Transverse colon (tissue), 4 donors: ENCODE measurements at regions of chr16 and their contacts with region 1.

Region 1: GRCh38 chr16:15865742-15866141 is 8.9 kb upstream of the MYH11 start:
- DNase-seq: no peak
- H3K4me3 ChIP-seq: no peak overlapping the region
- H3K27ac ChIP-seq: peak overlapping the region in 2 of 4 donors; percentile 18 to 61
- H3K4me1 ChIP-seq: peaks cover 0 to 3% (median 0%) of the 10 kb centered on the region in 4 donors
- H3K27me3 ChIP-seq: no peaks in the 10 kb centered on the region
- CTCF ChIP-seq: no peak
- EP300 ChIP-seq: no peak
- POLR2A ChIP-seq: no peak

Region 2: GRCh38 chr16:16042076-16042475 is 176.3 kb after region 1 on chr16:
- in situ Hi-C with region 1: loop called in 1 of 4 experiments (anchors 10 kb)
- intact Hi-C with region 1: no loop called
- DNase-seq: no peak
- H3K4me3 ChIP-seq: no peak overlapping the region
- H3K27ac ChIP-seq: no peak overlapping the region
- H3K4me1 ChIP-seq: no peaks in the 10 kb centered on the region
- H3K27me3 ChIP-seq: no peaks in the 10 kb centered on the region
- CTCF ChIP-seq: no peak
- EP300 ChIP-seq: no peak
- POLR2A ChIP-seq: no peak